Caco-2 (cell line): ENCODE measurements at regions of chrX and their contacts with region 1.

Region 1: DNA sequence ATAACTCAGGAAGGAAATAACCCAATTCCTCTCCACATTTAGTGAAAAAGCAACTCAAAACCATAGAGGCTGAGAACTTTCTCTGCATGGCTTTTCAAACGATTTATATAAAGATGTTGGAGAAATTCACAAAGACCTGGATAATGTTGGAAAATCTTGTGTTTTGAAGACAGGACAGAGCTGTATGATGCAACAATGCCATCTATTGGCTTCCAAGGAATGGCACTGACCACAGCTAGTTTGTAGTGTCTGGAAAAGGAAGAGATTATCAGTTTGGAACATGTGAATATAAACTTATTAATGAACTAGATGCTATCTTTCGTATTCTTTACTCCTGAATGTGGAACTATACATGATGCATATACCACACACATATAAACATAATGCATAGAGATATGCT is 503.6 kb downstream of the IL1RAPL1 start:
- DNase-seq: peak in 1 of 2 experiments; percentile 2
- H3K4me3 ChIP-seq: no peak overlapping the region
- H3K4me3 Mint-ChIP-seq: no peak overlapping the region
- H3K27ac Mint-ChIP-seq: no peak overlapping the region
- H3K4me1 ChIP-seq: no peaks in the 10 kb centered on the region
- H3K4me1 Mint-ChIP-seq: no peaks in the 10 kb centered on the region
- H3K27me3 ChIP-seq: no peaks in the 10 kb centered on the region
- H3K27me3 Mint-ChIP-seq: no peaks in the 10 kb centered on the region
- CTCF ChIP-seq: peak in 1 of 2 experiments; percentile 40

Region 2: DNA sequence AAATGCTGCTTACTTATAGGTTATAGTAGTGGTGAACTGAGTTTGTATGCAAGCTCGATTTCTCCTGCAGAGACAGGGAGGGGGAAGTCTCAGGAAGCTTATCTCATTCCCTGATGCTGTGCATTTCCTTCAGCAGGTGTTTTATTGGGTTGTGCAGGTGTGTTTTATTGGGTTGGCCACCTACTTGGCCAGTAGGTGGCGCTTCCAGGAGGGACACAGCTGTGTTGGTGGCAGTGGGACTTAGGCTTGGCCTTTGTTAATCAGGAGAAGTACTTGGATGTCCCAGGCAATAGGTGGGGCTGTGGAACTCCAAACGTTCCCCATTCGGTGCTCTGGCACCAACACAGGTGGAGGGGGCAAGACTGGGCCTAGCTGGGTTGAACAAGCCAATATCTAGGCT is 913.6 kb before region 1 on chrX:
- CTCF ChIA-PET with region 1: interaction called, 3 read pairs
- POLR2A ChIA-PET with region 1: no interaction called
- intact Hi-C with region 1: loop called (anchors 10 kb)
- DNase-seq: peak; percentile 26 to 33
- H3K4me3 ChIP-seq: no peak overlapping the region
- H3K4me3 Mint-ChIP-seq: no peak overlapping the region
- H3K27ac Mint-ChIP-seq: no peak overlapping the region
- H3K4me1 ChIP-seq: no peaks in the 10 kb centered on the region
- H3K4me1 Mint-ChIP-seq: no peaks in the 10 kb centered on the region
- H3K27me3 ChIP-seq: no peaks in the 10 kb centered on the region
- H3K27me3 Mint-ChIP-seq: no peaks in the 10 kb centered on the region
- CTCF ChIP-seq: peak; percentile 31 to 37

Region 3: GRCh38 chrX:28586981-28587551 is 503.7 kb before region 1 on chrX and contains the start of gene IL1RAPL1:
- CTCF ChIA-PET with region 1: no interaction called
- POLR2A ChIA-PET with region 1: no interaction called
- intact Hi-C with region 1: loop called (anchors 2 kb)
- DNase-seq: peak in 1 of 2 experiments; percentile 1
- H3K4me3 ChIP-seq: no peak within 1 kb of the TSS
- H3K4me3 Mint-ChIP-seq: no peak within 1 kb of the TSS
- H3K27ac Mint-ChIP-seq: no peak within 1 kb of the TSS
- H3K4me1 ChIP-seq: no peaks in the 10 kb centered on the region
- H3K4me1 Mint-ChIP-seq: no peaks in the 10 kb centered on the region
- H3K27me3 ChIP-seq: no peaks in the 10 kb centered on the region
- H3K27me3 Mint-ChIP-seq: no peaks in the 10 kb centered on the region
- CTCF ChIP-seq: no peak
- total RNA-seq, gene IL1RAPL1: 0.39 TPM in 1 of 2 replicates, not detected in the other

Region 4: GRCh38 chrX:29359276-29359675 is 268.5 kb after region 1 on chrX:
- CTCF ChIA-PET with region 1: no interaction called
- POLR2A ChIA-PET with region 1: no interaction called
- intact Hi-C with region 1: no loop called
- DNase-seq: no peak
- H3K4me3 ChIP-seq: no peak overlapping the region
- H3K4me3 Mint-ChIP-seq: no peak overlapping the region
- H3K27ac Mint-ChIP-seq: no peak overlapping the region
- H3K4me1 ChIP-seq: no peaks in the 10 kb centered on the region
- H3K4me1 Mint-ChIP-seq: no peaks in the 10 kb centered on the region
- H3K27me3 ChIP-seq: no peaks in the 10 kb centered on the region
- H3K27me3 Mint-ChIP-seq: no peaks in the 10 kb centered on the region
- CTCF ChIP-seq: no peak